H1 (cell line): ENCODE measurements at regions of chr10 and their contacts with region 1.

Region 1: DNA sequence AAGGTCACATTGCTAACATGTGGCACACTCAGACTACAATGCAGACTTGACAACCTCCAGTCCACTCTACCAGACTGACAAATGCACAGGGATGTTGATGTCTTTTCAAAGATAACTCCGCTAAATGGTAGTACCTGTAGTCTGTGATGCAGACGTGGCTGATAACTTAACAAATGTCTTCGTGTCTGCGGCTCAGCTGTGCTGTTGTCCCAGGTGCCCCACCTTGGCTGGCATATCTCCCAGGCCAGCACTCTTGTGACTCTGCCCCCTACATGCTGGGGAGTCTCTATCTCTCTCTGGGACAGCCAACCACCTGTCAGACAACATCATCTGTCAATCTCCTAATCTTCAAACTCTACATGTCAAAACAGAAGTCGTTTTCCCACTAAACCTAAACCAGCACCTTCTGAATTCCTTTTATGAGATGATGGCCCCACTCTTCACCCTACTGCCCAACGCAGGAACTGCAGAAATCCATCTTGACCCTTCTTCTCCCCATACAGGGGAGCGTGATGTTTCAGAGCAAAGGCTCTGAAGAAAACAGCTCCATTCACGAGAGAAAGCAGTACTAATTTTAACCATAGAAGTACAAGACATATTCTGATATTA is 156.4 kb downstream of the USP6NL start:
- DNase-seq: peak in 1 of 2 experiments; percentile 55
- H3K4me3 ChIP-seq: no peak overlapping the region
- H3K27ac ChIP-seq: no peak overlapping the region
- H3K4me1 ChIP-seq: no peaks in the 10 kb centered on the region
- H3K27me3 ChIP-seq: no peaks in the 10 kb centered on the region
- CTCF ChIP-seq: peak; percentile 23 to 58 (median 51)
- EP300 ChIP-seq: no peak
- POLR2A ChIP-seq: no peak
- RAD21 ChIP-seq: peak; percentile 63 to 66; a peak in 3 of 4 replicates

Region 2: DNA sequence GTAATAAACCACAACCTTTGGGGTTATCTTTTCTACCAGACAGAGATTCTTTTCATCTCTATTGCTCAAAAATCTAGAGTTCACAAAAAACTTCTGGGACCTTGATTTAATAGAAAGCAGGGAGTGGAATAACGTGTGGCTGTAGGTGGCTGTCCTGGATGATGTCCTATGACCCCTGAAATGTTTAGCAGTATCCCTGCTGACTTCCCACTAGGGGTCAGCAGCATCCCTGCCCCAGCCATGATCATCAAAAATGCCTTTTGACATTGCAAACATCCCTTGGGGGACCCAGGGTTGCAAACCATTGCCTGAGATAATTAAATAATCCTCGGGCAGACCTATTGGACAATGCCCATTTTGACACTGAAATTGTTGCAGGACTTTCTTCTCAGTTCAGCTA is 20.7 kb before region 1 on chr10:
- CTCF ChIA-PET with region 1: interaction called, 33 read pairs
- POLR2A ChIA-PET with region 1: interaction called, 3 read pairs
- DNase-seq: no peak
- H3K4me3 ChIP-seq: no peak overlapping the region
- H3K27ac ChIP-seq: no peak overlapping the region
- H3K4me1 ChIP-seq: peaks cover 17 to 32% (median 22%) of the 10 kb centered on the region in 4 experiments
- H3K27me3 ChIP-seq: no peaks in the 10 kb centered on the region; a peak in 1 of 7 replicates
- CTCF ChIP-seq: peak; percentile 71 to 80 (median 79)
- EP300 ChIP-seq: no peak
- POLR2A ChIP-seq: no peak
- RAD21 ChIP-seq: peak; percentile 78 to 81

Region 3: DNA sequence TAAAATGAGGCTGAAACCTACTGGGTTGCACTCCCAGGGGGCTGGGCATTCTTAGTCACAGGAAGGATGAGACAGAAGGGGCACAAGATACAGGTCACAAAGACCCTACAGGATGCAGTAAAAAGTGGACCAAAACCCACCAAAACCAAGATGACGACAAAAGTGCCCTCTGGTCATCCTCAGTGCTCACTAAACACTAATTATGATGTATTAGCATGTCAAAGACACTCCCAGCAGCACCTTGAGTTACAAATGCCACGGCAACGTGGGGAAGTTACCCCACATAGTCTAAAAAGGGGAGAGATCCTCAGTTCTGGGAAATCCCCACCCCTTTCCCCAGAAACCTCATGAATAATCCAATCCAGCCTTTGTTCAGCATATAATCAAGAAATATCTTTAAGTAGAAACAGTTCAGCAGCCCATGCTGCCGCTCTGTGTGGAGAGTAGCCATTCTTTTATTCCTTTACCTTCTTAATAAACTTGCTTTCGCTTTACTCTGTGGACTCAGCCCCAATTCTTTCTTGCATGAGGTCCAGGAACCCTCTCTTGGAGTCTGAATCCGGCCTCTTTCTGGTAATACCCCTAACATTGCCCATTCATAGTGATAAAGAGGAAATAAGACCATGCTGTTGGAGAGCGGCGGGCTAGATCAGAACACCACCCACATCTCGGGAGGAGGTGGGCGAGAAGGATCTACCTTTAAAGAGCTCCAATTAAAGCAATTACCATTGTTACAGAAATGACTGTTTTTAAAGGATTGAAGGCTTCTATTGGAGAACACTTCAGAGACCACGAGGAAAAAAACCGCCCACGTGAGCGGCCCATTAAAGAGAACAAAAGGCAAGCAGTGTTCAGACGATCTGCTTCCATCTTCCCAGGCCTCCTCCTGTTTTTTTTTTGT is 14.6 kb before region 1 on chr10:
- CTCF ChIA-PET with region 1: interaction called, 33 read pairs
- POLR2A ChIA-PET with region 1: interaction called, 3 read pairs
- DNase-seq: peak in 1 of 2 experiments; percentile 38
- H3K4me3 ChIP-seq: no peak overlapping the region
- H3K27ac ChIP-seq: no peak overlapping the region
- H3K4me1 ChIP-seq: peaks cover 10 to 25% (median 17%) of the 10 kb centered on the region in 4 experiments
- H3K27me3 ChIP-seq: no peaks in the 10 kb centered on the region
- CTCF ChIP-seq: no peak
- EP300 ChIP-seq: no peak
- POLR2A ChIP-seq: no peak
- RAD21 ChIP-seq: no peak

Region 4: GRCh38 chr10:11468126-11468742 is 13.2 kb after region 1 on chr10:
- CTCF ChIA-PET with region 1: interaction called, 14 read pairs
- POLR2A ChIA-PET with region 1: interaction called, 5 read pairs
- DNase-seq: no peak
- H3K4me3 ChIP-seq: no peak overlapping the region
- H3K27ac ChIP-seq: no peak overlapping the region
- H3K4me1 ChIP-seq: peaks cover 4 to 22% (median 15%) of the 10 kb centered on the region in 4 experiments; a peak in 6 of 7 replicates
- H3K27me3 ChIP-seq: no peaks in the 10 kb centered on the region
- CTCF ChIP-seq: no peak
- EP300 ChIP-seq: no peak
- POLR2A ChIP-seq: no peak
- RAD21 ChIP-seq: no peak

Region 5: GRCh38 chr10:11586170-11586569 is 131.1 kb after region 1 on chr10:
- CTCF ChIA-PET with region 1: no interaction called
- POLR2A ChIA-PET with region 1: no interaction called
- DNase-seq: no peak
- H3K4me3 ChIP-seq: no peak overlapping the region
- H3K27ac ChIP-seq: no peak overlapping the region
- H3K4me1 ChIP-seq: peaks cover 0 to 4% (median 1%) of the 10 kb centered on the region in 4 experiments; a peak in 3 of 7 replicates
- H3K27me3 ChIP-seq: no peaks in the 10 kb centered on the region
- CTCF ChIP-seq: no peak
- EP300 ChIP-seq: no peak
- POLR2A ChIP-seq: no peak
- RAD21 ChIP-seq: no peak